ENCODE measurements at regions of chr17 and their contacts with region 1.

Region 1: DNA sequence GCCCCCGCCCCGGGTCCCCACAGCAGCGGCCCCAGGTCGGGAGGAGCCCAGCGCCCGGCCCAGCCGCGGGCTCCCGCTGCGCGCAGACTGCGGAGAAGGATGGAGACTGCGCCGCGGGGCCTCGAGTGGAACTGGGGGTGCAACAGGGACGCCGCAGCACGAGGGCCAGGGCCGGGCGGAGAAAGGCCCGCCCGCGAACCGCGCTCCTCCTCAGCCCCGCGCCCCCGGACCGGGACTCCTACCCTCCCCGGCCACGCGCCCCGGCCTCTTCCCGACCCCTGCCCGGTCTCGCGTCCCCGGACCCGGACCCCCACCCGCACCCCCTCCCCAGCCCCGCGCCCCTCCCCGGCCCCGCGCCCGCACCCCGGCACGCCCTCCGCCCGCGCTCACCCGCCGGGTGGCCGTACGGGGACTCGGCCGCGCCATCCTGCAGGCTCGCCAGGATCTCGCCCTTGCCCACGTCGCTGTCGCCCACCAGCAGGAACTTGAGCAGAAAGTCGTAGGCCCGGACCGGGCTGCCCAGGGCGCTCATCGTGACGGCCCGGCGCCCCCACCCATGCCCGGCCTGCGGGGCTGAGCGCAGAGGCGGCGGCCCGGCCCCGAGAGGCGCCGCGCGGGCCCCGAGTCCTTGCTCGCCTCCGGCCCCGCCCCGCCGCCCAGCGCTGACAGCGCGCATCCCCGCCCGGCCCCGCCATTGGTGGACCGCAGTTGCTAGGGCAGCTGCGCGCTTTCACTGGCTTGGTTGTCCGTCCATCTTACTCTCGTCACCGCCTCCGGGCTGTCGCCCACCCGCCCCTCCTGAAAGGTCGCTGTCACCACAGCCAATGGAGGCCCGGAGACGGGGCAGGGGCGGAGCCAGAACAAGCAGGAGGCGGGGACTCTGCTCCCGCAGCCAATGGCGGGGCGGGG is at the start of gene RAB40B:
- DNase-seq: peak; percentile 99 to 100 (median 100)

Region 2: DNA sequence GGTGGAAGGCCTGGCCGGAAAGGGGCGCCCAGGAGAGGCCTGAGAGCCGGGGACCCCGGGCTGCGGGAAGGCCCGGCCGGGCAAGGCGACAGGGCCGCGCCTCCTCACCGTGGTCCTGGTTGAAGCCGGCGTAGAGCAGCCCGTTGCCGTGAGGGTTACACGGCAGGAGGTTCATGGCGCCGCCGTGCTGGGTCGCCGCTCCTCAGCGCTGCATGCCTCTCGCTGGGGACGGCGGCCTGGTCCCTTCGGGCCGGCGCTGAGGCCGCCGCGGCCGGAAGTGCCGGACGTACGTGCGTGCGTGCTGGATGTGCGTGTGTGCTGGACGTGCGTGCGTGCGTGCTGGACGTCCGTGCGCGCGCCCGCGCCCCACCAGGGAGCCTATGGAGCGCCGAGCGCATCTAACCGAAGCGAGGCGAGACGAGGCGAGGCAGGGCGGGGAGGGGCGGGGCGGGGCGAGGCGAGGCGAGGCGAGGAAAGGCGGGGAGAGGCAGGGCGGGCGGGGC is 50.1 kb before region 1 on chr17 and contains the start of gene WDR45B:
- intact Hi-C with region 1: loop called (anchors 5 kb)
- DNase-seq: peak; percentile 91 to 99 (median 96)

Region 3: GRCh38 chr17:82662711-82663261 is 35.5 kb before region 1 on chr17:
- intact Hi-C with region 1: no loop called
- DNase-seq: peak in 6 of 42 donors; percentile 7 to 33 (median 15)

Region 4: DNA sequence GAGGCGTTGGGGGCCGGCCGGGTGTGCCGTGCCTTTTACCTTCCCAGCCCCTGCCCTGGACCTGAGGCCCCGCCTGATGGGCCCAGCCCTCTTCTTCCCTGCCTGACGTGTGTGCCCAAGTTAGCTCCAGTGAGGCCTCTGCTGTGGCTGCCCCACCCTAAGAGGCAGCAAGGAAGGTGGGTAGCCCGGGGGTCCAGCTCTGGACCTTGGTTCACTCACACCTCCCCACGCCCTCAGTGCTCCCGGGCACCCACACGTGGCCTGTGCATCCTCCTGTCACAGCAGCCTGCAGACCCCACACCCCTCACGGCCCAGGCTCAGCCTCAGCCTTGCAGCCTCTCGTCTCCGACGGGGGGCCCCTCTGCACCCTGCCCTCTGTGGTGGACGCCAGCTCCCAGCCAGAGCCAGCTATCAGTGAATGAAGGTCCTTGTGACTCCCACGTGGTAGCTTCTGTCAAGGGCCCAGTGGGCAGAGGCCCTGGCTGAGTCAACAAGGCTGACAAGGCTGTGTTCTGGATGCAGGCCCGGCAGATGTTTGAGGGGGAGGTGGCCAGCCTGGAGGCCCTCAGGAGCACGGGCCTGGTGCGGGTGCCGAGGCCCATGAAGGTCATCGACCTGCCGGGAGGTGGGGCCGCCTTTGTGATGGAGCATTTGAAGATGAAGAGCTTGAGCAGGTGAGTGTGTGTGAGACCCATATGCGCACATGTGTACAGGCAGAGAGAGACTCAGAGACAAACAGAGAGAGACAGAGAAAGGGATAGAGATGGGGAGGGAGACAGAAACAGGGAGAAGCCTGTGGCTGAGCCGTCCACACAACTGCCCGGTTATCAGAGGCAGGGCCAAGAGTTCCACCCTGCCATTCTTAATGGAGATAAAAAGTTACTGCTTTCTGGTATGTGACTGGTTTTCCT is 39.9 kb after region 1 on chr17:
- intact Hi-C with region 1: loop called (anchors 2 kb)
- DNase-seq: peak; percentile 86 to 99 (median 96)

Region 5: GRCh38 chr17:82767041-82767754 is 68.9 kb after region 1 on chr17:
- intact Hi-C with region 1: no loop called
- DNase-seq: peak; percentile 26 to 94 (median 78)